Activated CD4-positive, alpha-beta memory T cell treated with anti-CD3 and anti-CD28 coated beads, Interleukin-2, amount 10 ng/mL, durations not matched to agents 7 days and 5 days (primary cell): ENCODE measurements at regions of chr11 and their contacts with region 1.

Region 1: DNA sequence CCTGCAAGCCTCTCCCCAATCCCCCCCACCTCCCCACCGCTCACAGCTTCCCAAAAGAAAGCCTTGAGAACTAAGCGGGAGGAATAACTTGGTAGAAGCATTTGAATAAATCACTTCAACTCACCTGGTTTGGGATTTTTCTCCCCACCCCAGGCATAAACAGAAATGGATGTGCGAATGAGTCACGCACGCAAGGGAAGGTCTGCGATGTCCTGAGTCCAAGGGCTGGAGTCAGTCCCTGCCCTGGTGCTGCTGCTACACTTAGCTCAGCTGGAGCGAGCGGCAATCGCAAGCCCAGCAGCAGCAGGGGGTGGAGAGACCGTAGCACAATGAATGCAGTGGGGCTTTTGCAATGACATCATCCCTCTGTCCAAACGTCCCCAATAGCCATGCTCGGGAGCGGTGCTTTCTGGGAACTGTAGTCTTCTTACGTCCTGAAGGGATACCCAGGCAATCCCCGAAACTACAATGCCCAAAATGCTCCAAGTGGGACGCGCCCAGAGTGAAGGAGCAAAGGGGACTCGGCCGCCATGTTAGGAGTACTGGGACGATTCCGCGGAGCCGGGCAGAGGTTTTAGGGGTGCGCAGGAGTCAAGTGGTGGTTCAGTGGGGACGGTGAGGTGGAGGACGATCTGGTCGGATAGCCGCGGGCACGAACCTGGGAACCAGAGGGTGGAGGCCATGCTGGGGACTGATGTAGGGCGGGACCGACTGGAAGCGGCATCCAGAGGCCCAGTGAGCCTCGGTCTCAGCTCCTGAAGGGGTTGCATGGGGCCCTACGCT is at the start of gene RAB30:
- DNase-seq: peak; percentile 95
- H3K4me3 Mint-ChIP-seq: no peak within 1 kb of the TSS
- H3K27ac Mint-ChIP-seq: no peak within 1 kb of the TSS
- H3K4me1 Mint-ChIP-seq: peaks cover 44% of the 10 kb centered on the region
- H3K27me3 Mint-ChIP-seq: no peaks in the 10 kb centered on the region
- total RNA-seq, gene RAB30: 9.9 to 10.2 TPM

Region 2: DNA sequence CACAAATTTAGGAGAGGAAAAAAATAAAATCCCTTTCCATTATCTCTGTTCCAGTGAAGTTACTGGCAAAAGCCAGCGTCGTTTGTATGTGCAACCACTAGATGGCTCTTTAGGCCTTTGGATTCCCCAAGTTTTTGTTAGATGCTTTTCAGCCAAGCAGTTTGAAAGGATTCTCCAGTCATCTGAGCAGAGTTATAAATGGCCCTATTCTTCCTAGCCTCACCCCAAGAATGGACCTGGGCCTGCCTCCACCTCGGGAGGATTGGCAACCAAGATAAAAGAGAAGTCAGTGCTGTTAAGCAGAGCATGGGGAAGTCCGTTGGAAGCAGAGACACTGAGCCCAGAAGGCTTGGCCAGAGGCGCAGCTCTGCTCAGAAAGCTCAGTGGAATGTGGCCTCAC is 353.5 kb before region 1 on chr11:
- CTCF ChIA-PET with region 1: no interaction called
- POLR2A ChIA-PET with region 1: no interaction called
- DNase-seq: no peak
- H3K4me3 Mint-ChIP-seq: no peak overlapping the region
- H3K27ac Mint-ChIP-seq: no peak overlapping the region
- H3K4me1 Mint-ChIP-seq: no peaks in the 10 kb centered on the region
- H3K27me3 Mint-ChIP-seq: peaks cover under 1% of the 10 kb centered on the region

Region 3: DNA sequence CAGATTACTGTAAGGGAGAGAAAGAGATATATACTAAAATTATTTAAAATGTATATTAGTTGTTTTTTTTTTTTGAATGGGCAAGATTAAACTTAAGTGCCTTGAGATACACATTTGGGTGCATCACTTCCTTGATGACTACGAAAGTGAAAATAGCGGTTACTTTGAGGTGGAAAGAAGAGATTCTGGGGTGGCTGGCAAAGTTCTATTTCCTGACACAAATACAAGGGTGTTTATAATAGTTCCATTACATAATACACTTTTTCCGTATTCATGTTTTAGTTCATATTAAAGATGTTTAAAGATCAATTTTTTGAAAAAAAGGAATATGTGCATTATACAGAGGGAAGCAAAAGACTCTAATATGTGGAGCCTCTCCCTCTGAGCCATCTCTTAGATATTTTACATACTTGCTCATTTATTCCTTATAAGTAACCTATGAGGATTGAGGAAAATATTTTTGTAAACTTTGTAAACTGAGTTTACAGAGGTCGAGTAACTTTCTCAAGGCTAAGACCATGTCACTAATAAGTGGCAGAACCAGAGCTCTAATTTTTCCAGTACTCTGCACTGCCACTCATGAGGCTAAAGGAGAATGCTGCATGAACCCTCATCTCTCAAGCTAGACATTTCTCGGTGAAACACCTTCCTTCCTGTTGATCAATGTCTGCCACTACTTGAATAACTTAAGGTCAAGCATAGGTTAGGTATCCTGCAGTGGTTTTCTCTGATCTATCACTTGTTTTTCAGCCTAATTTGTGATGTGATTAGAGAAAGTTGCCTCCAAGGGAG is 111.6 kb before region 1 on chr11:
- CTCF ChIA-PET with region 1: interaction called, 4 read pairs
- POLR2A ChIA-PET with region 1: interaction called, 13 read pairs
- DNase-seq: peak; percentile 47
- H3K4me3 Mint-ChIP-seq: no peak overlapping the region
- H3K27ac Mint-ChIP-seq: peak overlapping the region; percentile 24
- H3K4me1 Mint-ChIP-seq: peaks cover 62% of the 10 kb centered on the region
- H3K27me3 Mint-ChIP-seq: peaks cover 17% of the 10 kb centered on the region

Region 4: GRCh38 chr11:82969811-82970210 is 101.9 kb before region 1 on chr11:
- CTCF ChIA-PET with region 1: no interaction called
- POLR2A ChIA-PET with region 1: interaction called, 17 read pairs
- DNase-seq: no peak
- H3K4me3 Mint-ChIP-seq: no peak overlapping the region
- H3K27ac Mint-ChIP-seq: no peak overlapping the region
- H3K4me1 Mint-ChIP-seq: peaks cover 13% of the 10 kb centered on the region
- H3K27me3 Mint-ChIP-seq: peaks cover 13% of the 10 kb centered on the region

Region 5: GRCh38 chr11:83051760-83052671 is 19.7 kb before region 1 on chr11:
- CTCF ChIA-PET with region 1: interaction called, 3 read pairs
- POLR2A ChIA-PET with region 1: interaction called, 12 read pairs
- DNase-seq: no peak
- H3K4me3 Mint-ChIP-seq: no peak overlapping the region
- H3K27ac Mint-ChIP-seq: no peak overlapping the region
- H3K4me1 Mint-ChIP-seq: peaks cover 46% of the 10 kb centered on the region
- H3K27me3 Mint-ChIP-seq: no peaks in the 10 kb centered on the region

Region 6: GRCh38 chr11:83088965-83089364 is 17.2 kb after region 1 on chr11:
- CTCF ChIA-PET with region 1: interaction called, 13 read pairs
- POLR2A ChIA-PET with region 1: interaction called, 4 read pairs
- DNase-seq: no peak
- H3K4me3 Mint-ChIP-seq: no peak overlapping the region
- H3K27ac Mint-ChIP-seq: no peak overlapping the region
- H3K4me1 Mint-ChIP-seq: peaks cover 1% of the 10 kb centered on the region
- H3K27me3 Mint-ChIP-seq: no peaks in the 10 kb centered on the region

Region 7: GRCh38 chr11:83193315-83194280 is 121.8 kb after region 1 on chr11 and contains the start of gene ANKRD42:
- CTCF ChIA-PET with region 1: no interaction called
- POLR2A ChIA-PET with region 1: interaction called, 11 read pairs
- DNase-seq: peak; percentile 88
- H3K4me3 Mint-ChIP-seq: peak within 1 kb of the TSS; percentile 91
- H3K27ac Mint-ChIP-seq: peak within 1 kb of the TSS; percentile 79
- H3K4me1 Mint-ChIP-seq: peaks cover 26% of the 10 kb centered on the region
- H3K27me3 Mint-ChIP-seq: no peaks in the 10 kb centered on the region
- total RNA-seq, gene ANKRD42: 1.7 TPM